ENCODE measurements at regions of chr12 and their contacts with region 1.

Region 1: DNA sequence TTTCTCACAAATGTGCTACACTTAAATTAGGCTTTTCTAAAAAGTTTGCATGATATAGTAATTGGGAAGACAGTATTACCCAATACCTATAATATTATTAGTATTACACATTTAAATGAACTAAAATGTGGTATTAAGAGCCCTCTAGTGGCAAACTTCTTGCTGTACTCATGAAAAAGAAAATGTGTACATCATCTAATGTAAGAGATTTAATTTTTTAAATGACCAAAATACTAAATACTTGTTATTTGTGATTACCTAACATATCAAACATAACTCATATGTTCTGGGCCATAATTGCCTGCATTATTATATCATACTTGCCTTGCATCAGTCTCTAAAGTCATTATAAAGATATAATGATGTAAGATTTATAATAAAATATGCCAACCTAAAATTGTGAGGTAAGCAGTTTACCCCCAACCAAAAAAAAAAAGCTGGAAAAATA is 64.2 kb downstream of the DNAI7 start:
- DNase-seq: no peak
- H3K4me3 Mint-ChIP-seq: no peak overlapping the region
- H3K27ac Mint-ChIP-seq: no peak overlapping the region
- H3K4me1 Mint-ChIP-seq: no peaks in the 10 kb centered on the region
- H3K27me3 Mint-ChIP-seq: peaks cover 4% of the 10 kb centered on the region

Region 2: DNA sequence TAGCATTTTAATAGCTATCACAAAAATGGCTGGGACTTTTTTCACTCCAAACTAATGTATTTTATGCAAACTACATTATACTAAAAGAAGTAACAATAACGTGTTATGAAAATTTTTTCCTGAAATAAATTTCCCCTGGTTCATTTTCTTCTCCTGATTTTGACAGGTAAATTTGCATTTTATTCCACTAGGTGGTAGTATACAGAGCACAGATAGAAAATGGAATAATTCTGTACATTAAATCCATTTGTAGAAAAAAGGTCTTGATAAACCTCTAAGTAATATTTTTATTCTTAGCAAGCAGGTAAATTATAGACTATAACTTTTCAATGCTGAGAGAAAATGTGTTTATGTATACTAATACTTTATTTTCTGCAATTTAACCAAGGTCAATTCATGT is 278.3 kb before region 1 on chr12:
- intact Hi-C with region 1: loop called (anchors 5 kb)
- DNase-seq: no peak
- H3K4me3 Mint-ChIP-seq: no peak overlapping the region
- H3K27ac Mint-ChIP-seq: no peak overlapping the region
- H3K4me1 Mint-ChIP-seq: peaks cover 18% of the 10 kb centered on the region
- H3K27me3 Mint-ChIP-seq: no peaks in the 10 kb centered on the region

Region 3: DNA sequence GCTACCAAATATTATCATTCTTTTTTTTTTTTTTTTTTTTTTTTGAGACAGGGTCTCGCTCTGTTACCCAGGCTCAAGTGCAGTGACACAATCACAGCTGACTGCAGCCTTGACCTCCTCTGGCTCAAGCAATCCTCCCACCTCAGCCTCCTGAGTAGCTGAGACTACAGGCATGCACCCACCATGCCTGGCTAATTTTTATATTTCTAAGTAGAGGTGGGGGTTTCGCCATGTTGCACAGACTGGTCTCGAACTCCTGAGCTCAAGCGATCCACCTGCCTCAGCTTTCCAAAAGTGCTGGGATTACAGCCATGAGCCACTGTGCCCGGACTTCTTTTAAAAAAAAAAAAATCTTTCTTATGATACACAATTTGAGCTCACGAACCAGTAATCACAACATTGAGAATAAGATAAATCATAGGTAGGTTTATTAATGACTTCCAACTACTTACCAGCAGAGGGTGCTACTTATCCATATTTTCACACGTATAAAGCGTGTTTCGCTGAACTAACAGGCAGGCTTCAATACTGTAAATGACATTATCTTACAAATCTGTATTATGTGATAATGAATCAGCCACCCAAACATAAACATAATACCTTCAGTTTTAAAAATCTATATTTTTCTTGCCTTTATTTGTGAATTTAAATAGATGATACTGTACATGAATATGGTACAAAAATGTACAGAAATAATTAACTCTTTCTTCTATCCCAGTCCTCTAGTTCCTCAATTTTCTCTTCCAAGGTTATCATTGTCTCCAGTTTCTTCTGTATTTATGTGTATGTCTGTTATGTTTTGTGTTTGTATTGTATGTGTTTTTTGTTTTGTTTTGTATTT is 139.3 kb before region 1 on chr12:
- intact Hi-C with region 1: loop called (anchors 1 kb)
- DNase-seq: peak; percentile 73
- H3K4me3 Mint-ChIP-seq: no peak overlapping the region
- H3K27ac Mint-ChIP-seq: no peak overlapping the region
- H3K4me1 Mint-ChIP-seq: no peaks in the 10 kb centered on the region
- H3K27me3 Mint-ChIP-seq: peaks cover 8% of the 10 kb centered on the region

Region 4: GRCh38 chr12:25089738-25090137 is 41.0 kb before region 1 on chr12:
- intact Hi-C with region 1: no loop called
- DNase-seq: no peak
- H3K4me3 Mint-ChIP-seq: no peak overlapping the region
- H3K27ac Mint-ChIP-seq: peak overlapping the region; percentile 0
- H3K4me1 Mint-ChIP-seq: peaks cover 5% of the 10 kb centered on the region
- H3K27me3 Mint-ChIP-seq: no peaks in the 10 kb centered on the region

Measured in activated CD4-positive, alpha-beta T cell treated with anti-CD3 and anti-CD28 coated beads, Interleukin-2, amount 10 ng/mL, durations not matched to agents 24 days and 14 days (primary cell).